ENCODE measurements at regions of chr13 and their contacts with region 1.

Region 1: GRCh38 chr13:108961542-108962125 is 332.2 kb downstream of the MYO16 start:
- DNase-seq: peak; percentile 74
- H3K4me3 Mint-ChIP-seq: no peak overlapping the region
- H3K27ac Mint-ChIP-seq: no peak overlapping the region
- H3K4me1 Mint-ChIP-seq: peaks cover 2% of the 10 kb centered on the region
- H3K27me3 Mint-ChIP-seq: peaks cover 2% of the 10 kb centered on the region

Region 2: DNA sequence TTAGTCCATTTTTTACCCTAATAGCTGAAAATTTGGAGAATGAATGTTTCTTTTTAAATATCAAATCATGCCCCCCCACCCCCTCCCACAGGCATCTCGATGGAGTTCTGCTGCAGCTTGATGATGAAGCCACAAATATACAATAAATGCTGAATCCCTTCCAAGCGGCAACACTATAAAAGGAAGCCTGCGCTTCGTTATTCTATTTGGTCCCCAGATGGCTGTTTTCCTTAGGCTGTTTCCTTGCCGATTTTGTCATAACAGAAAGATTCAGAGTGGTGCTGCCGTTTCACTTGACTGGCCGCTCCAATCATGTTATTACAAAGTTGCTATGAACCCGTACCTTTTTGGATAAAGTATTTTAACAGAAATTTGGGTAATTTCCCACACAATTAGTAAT is 252.7 kb before region 1 on chr13:
- intact Hi-C with region 1: no loop called
- DNase-seq: no peak
- H3K4me3 Mint-ChIP-seq: no peak overlapping the region
- H3K27ac Mint-ChIP-seq: no peak overlapping the region
- H3K4me1 Mint-ChIP-seq: no peaks in the 10 kb centered on the region
- H3K27me3 Mint-ChIP-seq: no peaks in the 10 kb centered on the region

Region 3: GRCh38 chr13:108915634-108916512 is 45.8 kb before region 1 on chr13:
- intact Hi-C with region 1: loop called (anchors 1 kb)
- DNase-seq: peak; percentile 93
- H3K4me3 Mint-ChIP-seq: peak overlapping the region; percentile 77
- H3K27ac Mint-ChIP-seq: peak overlapping the region; percentile 93
- H3K4me1 Mint-ChIP-seq: peaks cover 29% of the 10 kb centered on the region
- H3K27me3 Mint-ChIP-seq: peaks cover 14% of the 10 kb centered on the region

Region 4: DNA sequence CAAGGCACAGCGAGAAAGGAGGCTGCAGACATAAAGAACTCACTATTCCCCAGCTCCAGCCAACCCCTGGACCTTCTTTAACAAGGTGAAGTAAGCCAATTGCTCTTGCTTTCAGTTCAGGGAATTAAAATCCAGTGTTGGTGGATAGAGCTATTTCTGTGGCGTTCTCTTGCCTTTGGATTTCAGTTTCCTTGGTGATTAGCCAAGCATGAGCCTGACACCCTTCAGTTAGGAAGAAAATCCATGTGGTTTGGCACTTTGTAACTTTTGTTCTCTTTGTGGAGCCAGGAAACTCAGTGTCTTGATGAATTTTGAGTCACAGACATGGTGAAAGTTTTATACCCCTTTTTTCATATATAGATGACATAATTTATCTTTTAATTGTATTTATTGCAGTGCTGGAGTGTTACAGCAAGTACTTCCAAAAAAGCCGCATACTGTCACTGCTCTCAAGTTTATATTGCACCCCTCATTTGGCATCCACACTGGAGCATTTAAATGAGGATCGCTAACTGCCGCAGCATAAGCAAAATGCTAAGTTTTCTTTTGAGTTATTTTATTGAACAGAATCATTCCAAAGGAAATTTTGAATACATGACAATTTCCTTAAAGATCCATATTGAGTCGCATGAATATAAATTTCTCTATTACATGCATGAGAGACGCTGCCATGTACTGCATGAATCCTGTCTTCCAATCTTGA is 74.6 kb after region 1 on chr13:
- intact Hi-C with region 1: no loop called
- DNase-seq: no peak
- H3K4me3 Mint-ChIP-seq: no peak overlapping the region
- H3K27ac Mint-ChIP-seq: no peak overlapping the region
- H3K4me1 Mint-ChIP-seq: no peaks in the 10 kb centered on the region
- H3K27me3 Mint-ChIP-seq: no peaks in the 10 kb centered on the region

Region 5: GRCh38 chr13:110116072-110116487 is 1154.4 kb after region 1 on chr13:
- intact Hi-C with region 1: loop called (anchors 1 kb)
- DNase-seq: peak; percentile 85
- H3K4me3 Mint-ChIP-seq: no peak overlapping the region
- H3K27ac Mint-ChIP-seq: no peak overlapping the region
- H3K4me1 Mint-ChIP-seq: no peaks in the 10 kb centered on the region
- H3K27me3 Mint-ChIP-seq: peaks cover 22% of the 10 kb centered on the region

Measured in activated CD4-positive, alpha-beta T cell treated with anti-CD3 and anti-CD28 coated beads, Interleukin-2, amount 10 ng/mL, durations not matched to agents 24 days and 14 days (primary cell).